Naive thymus-derived CD4-positive, alpha-beta T cell (primary cell): ENCODE measurements at regions of chr16 and their contacts with region 1.

Region 1: GRCh38 chr16:67480833-67481560 is at the start of gene ATP6V0D1:
- DNase-seq: peak; percentile 97 to 100 (median 99)
- ATAC-seq: peak; percentile 94
- H3K4me3 ChIP-seq: peak within 1 kb of the TSS; percentile 92
- H3K4me3 Mint-ChIP-seq: peak within 1 kb of the TSS; percentile 95 to 100 (median 99)
- H3K27ac ChIP-seq: peak within 1 kb of the TSS; percentile 99
- H3K27ac Mint-ChIP-seq: peak within 1 kb of the TSS; percentile 95 to 99 (median 98)
- H3K4me1 ChIP-seq: peaks cover 15 to 25% of the 10 kb centered on the region in 2 donors
- H3K4me1 Mint-ChIP-seq: peaks cover 20 to 60% (median 37%) of the 10 kb centered on the region in 7 donors
- H3K27me3 ChIP-seq: no peaks in the 10 kb centered on the region
- H3K27me3 Mint-ChIP-seq: no peaks in the 10 kb centered on the region
- total RNA-seq, gene ATP6V0D1: 35.8 to 104 (median 54.7) TPM

Region 2: GRCh38 chr16:66934153-66934838 is 546.7 kb before region 1 on chr16 and contains the start of gene CIAO2B:
- CTCF ChIA-PET with region 1: no interaction called
- POLR2A ChIA-PET with region 1: no interaction called
- intact Hi-C with region 1: loop called in 1 of 2 experiments (anchors 1 kb)
- DNase-seq: peak; percentile 86 to 95 (median 91)
- ATAC-seq: peak; percentile 93
- H3K4me3 ChIP-seq: peak within 1 kb of the TSS; percentile 96
- H3K4me3 Mint-ChIP-seq: peak within 1 kb of the TSS; percentile 91 to 99 (median 98)
- H3K27ac ChIP-seq: peak within 1 kb of the TSS; percentile 97
- H3K27ac Mint-ChIP-seq: peak within 1 kb of the TSS; percentile 96 to 99 (median 98)
- H3K4me1 ChIP-seq: peaks cover 24 to 35% of the 10 kb centered on the region in 2 donors
- H3K4me1 Mint-ChIP-seq: peaks cover 38 to 63% (median 54%) of the 10 kb centered on the region in 7 donors
- H3K27me3 ChIP-seq: no peaks in the 10 kb centered on the region
- H3K27me3 Mint-ChIP-seq: no peaks in the 10 kb centered on the region
- total RNA-seq, gene CIAO2B: 47.0 to 116 (median 58.5) TPM

Region 3: DNA sequence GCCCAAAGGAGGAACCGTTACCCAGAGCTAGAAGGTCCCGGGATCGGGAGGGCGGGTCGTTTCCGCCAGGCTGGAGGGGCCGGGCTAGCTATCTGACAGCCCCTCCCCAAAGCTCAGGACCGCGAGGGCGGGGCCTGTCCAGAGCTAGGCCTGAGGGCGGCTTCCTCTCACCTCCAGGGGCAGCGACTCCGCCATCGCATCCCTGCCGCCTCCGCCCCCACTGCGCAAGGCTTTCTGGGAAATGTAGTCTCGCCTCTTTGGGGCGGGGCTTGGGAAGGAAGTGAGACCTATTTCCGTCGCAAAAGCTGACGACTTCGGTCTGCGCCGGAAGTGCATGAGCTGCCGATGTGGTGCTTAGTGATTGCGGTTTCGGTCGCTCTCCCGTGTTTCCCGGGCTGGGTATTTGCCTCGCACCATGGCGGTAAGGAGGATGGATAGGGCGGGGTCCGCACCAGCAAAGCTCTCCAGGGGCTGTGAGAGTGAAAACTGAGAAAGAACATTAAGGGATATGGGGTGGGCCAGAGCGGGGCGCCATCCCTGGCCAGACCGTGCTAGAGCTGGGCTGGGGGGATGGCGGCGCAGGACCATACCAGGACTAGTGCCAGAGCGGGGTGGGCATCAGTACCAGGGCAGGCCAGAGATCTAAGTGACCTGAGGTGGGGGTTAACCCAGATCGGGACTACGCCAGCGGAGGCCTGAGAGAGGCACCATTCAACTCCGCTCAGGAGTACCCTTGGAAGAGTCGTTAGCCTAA is 254.0 kb before region 1 on chr16 and contains the start of gene TMEM208:
- CTCF ChIA-PET with region 1: no interaction called
- POLR2A ChIA-PET with region 1: no interaction called
- intact Hi-C with region 1: loop called in 1 of 2 experiments (anchors 1 kb)
- DNase-seq: peak; percentile 94 to 99 (median 97)
- ATAC-seq: peak; percentile 99
- H3K4me3 ChIP-seq: peak within 1 kb of the TSS; percentile 90
- H3K4me3 Mint-ChIP-seq: peak within 1 kb of the TSS; percentile 94 to 100 (median 98)
- H3K27ac ChIP-seq: peak within 1 kb of the TSS; percentile 85
- H3K27ac Mint-ChIP-seq: peak within 1 kb of the TSS; percentile 93 to 100 (median 99)
- H3K4me1 ChIP-seq: peaks cover 14 to 38% of the 10 kb centered on the region in 2 donors
- H3K4me1 Mint-ChIP-seq: peaks cover 37 to 62% (median 50%) of the 10 kb centered on the region in 7 donors
- H3K27me3 ChIP-seq: no peaks in the 10 kb centered on the region
- H3K27me3 Mint-ChIP-seq: no peaks in the 10 kb centered on the region
- total RNA-seq, gene TMEM208: 27.6 to 44.8 (median 32.7) TPM

Region 4: GRCh38 chr16:67499106-67499505 is 18.1 kb after region 1 on chr16:
- CTCF ChIA-PET with region 1: interaction called, 11 read pairs
- POLR2A ChIA-PET with region 1: no interaction called
- intact Hi-C with region 1: loop called in 1 of 2 experiments (anchors 1 kb)
- DNase-seq: no peak
- ATAC-seq: no peak
- H3K4me3 ChIP-seq: no peak overlapping the region
- H3K4me3 Mint-ChIP-seq: no peak overlapping the region
- H3K27ac ChIP-seq: no peak overlapping the region
- H3K27ac Mint-ChIP-seq: peak overlapping the region in 7 of 9 donors; percentile 44 to 93 (median 69)
- H3K4me1 ChIP-seq: peaks cover 12 to 15% of the 10 kb centered on the region in 2 donors
- H3K4me1 Mint-ChIP-seq: peaks cover 15 to 29% (median 20%) of the 10 kb centered on the region in 7 donors
- H3K27me3 ChIP-seq: no peaks in the 10 kb centered on the region
- H3K27me3 Mint-ChIP-seq: no peaks in the 10 kb centered on the region

Region 5: GRCh38 chr16:67579686-67580085 is 98.7 kb after region 1 on chr16:
- CTCF ChIA-PET with region 1: no interaction called
- POLR2A ChIA-PET with region 1: no interaction called
- intact Hi-C with region 1: no loop called
- DNase-seq: no peak
- ATAC-seq: no peak
- H3K4me3 ChIP-seq: no peak overlapping the region
- H3K4me3 Mint-ChIP-seq: no peak overlapping the region
- H3K27ac ChIP-seq: no peak overlapping the region
- H3K27ac Mint-ChIP-seq: peak overlapping the region in 6 of 9 donors; percentile 3 to 68 (median 37)
- H3K4me1 ChIP-seq: no peaks in the 10 kb centered on the region
- H3K4me1 Mint-ChIP-seq: peaks cover 8 to 39% (median 22%) of the 10 kb centered on the region in 7 donors
- H3K27me3 ChIP-seq: no peaks in the 10 kb centered on the region
- H3K27me3 Mint-ChIP-seq: no peaks in the 10 kb centered on the region

Region 6: GRCh38 chr16:67595033-67595355 is 114.0 kb after region 1 on chr16:
- CTCF ChIA-PET with region 1: no interaction called
- POLR2A ChIA-PET with region 1: no interaction called
- intact Hi-C with region 1: no loop called
- DNase-seq: no peak
- ATAC-seq: no peak
- H3K4me3 ChIP-seq: no peak overlapping the region
- H3K4me3 Mint-ChIP-seq: peak overlapping the region in 1 of 10 donors; percentile 1
- H3K27ac ChIP-seq: no peak overlapping the region
- H3K27ac Mint-ChIP-seq: peak overlapping the region in 7 of 9 donors; percentile 5 to 70 (median 56)
- H3K4me1 ChIP-seq: peaks cover 0 to 9% of the 10 kb centered on the region in 2 donors
- H3K4me1 Mint-ChIP-seq: peaks cover 29 to 62% (median 56%) of the 10 kb centered on the region in 7 donors
- H3K27me3 ChIP-seq: no peaks in the 10 kb centered on the region
- H3K27me3 Mint-ChIP-seq: no peaks in the 10 kb centered on the region

Region 7: DNA sequence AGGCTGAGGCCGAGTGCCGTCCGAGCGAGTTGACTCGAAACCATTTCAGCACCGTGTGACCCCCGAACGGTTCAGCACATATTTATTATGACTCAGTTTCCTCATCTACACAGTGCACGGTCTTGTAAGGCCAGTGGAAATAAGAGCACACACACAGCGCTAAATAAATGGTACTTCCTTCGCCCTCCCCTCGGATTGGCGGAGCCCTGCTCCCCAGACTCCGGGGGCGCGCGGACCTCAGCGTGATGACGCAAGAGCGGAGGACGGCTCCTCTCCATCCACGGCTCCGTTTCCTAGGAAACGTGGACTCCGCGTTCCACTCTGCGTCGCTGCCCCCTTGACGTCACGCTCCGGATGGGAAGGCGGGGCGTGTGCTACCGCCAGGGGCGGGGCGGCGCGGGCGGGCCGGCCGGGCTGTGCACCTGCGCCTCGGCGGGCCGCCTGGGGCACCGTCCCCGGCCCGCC is 179.6 kb after region 1 on chr16 and contains the start of gene PARD6A:
- CTCF ChIA-PET with region 1: no interaction called
- POLR2A ChIA-PET with region 1: interaction called, 4 read pairs
- intact Hi-C with region 1: loop called (anchors 1 kb)
- DNase-seq: peak; percentile 81 to 95 (median 93)
- ATAC-seq: peak; percentile 89
- H3K4me3 ChIP-seq: peak within 1 kb of the TSS; percentile 99
- H3K4me3 Mint-ChIP-seq: peak within 1 kb of the TSS; percentile 90 to 97 (median 94)
- H3K27ac ChIP-seq: peak within 1 kb of the TSS; percentile 97
- H3K27ac Mint-ChIP-seq: peak within 1 kb of the TSS; percentile 84 to 98 (median 97)
- H3K4me1 ChIP-seq: peaks cover 11 to 17% of the 10 kb centered on the region in 2 donors
- H3K4me1 Mint-ChIP-seq: peaks cover 15 to 40% (median 22%) of the 10 kb centered on the region in 7 donors
- H3K27me3 ChIP-seq: no peaks in the 10 kb centered on the region
- H3K27me3 Mint-ChIP-seq: no peaks in the 10 kb centered on the region
- total RNA-seq, gene PARD6A: 4.5 to 11.2 (median 4.7) TPM

Region 8: DNA sequence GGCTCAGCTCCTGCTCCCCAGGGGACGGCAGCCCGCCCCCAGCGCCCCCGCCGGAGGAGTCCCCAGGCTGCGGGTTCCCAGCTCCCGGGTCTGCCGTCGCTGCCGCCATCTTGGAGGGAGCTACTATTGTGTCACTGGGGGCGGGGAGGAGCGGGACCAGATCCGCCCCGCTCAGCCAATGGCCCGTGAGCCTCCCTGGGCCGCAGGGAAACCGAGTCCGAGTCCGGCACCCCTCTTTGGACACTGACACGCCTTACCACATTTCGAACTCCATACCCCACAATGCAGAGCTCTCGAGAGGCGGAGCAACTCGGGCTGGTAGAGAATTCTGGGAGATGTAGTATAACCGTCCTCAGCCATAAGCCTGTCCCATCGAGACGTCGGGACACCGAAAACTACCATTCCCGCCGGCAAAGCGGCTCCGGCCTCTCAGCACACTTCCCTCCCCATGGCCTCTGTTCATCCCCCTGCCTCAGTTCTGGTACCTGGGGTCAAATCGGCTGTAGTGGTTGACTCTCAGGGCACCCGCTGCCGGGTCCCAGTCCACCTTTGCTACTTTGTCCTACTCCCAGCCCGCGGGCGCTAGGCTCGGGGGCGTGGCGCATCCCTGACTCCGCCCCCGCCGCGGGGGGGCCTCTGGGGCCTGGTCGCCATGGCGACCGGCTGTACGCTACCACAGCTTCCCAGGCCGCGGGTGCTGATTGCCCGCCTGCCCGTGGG is 325.6 kb after region 1 on chr16 and contains the starts of genes RANBP10 and TSNAXIP1:
- CTCF ChIA-PET with region 1: no interaction called
- POLR2A ChIA-PET with region 1: interaction called, 3 read pairs
- intact Hi-C with region 1: loop called (anchors 1 kb)
- DNase-seq: peak; percentile 91 to 99 (median 97)
- ATAC-seq: peak; percentile 96
- H3K4me3 ChIP-seq: peak within 1 kb of the TSS; percentile 88
- H3K4me3 Mint-ChIP-seq: peak within 1 kb of the TSS; percentile 75 to 97 (median 94)
- H3K27ac ChIP-seq: peak within 1 kb of the TSS; percentile 89
- H3K27ac Mint-ChIP-seq: peak within 1 kb of the TSS; percentile 74 to 97 (median 95)
- H3K4me1 ChIP-seq: peaks cover 29 to 43% of the 10 kb centered on the region in 2 donors
- H3K4me1 Mint-ChIP-seq: peaks cover 13 to 49% (median 42%) of the 10 kb centered on the region in 7 donors
- H3K27me3 ChIP-seq: no peaks in the 10 kb centered on the region
- H3K27me3 Mint-ChIP-seq: peaks cover 0 to under 1% (median 0%) of the 10 kb centered on the region in 5 donors
- total RNA-seq, gene RANBP10: 22.3 to 26.6 (median 24.7) TPM
- total RNA-seq, gene TSNAXIP1: 0.24 to 1.1 (median 0.54) TPM

Region 9: GRCh38 chr16:67892899-67893742 is 412.1 kb after region 1 on chr16 and contains the start of gene PSKH1:
- CTCF ChIA-PET with region 1: no interaction called
- POLR2A ChIA-PET with region 1: no interaction called
- intact Hi-C with region 1: loop called in 1 of 2 experiments (anchors 2 kb)
- DNase-seq: peak; percentile 77 to 92 (median 84)
- ATAC-seq: peak; percentile 99
- H3K4me3 ChIP-seq: peak within 1 kb of the TSS; percentile 89
- H3K4me3 Mint-ChIP-seq: peak within 1 kb of the TSS; percentile 86 to 97 (median 94)
- H3K27ac ChIP-seq: peak within 1 kb of the TSS; percentile 94
- H3K27ac Mint-ChIP-seq: peak within 1 kb of the TSS; percentile 85 to 98 (median 97)
- H3K4me1 ChIP-seq: peaks cover 12 to 15% of the 10 kb centered on the region in 2 donors
- H3K4me1 Mint-ChIP-seq: peaks cover 22 to 48% (median 35%) of the 10 kb centered on the region in 7 donors
- H3K27me3 ChIP-seq: no peaks in the 10 kb centered on the region
- H3K27me3 Mint-ChIP-seq: no peaks in the 10 kb centered on the region
- total RNA-seq, gene PSKH1: 18.0 to 28.5 (median 23.3) TPM